B cell (primary cell): ENCODE measurements at regions of chr11 and their contacts with region 1.

Region 1: GRCh38 chr11:74929431-74930363 is 19.2 kb downstream of the XRRA1 start:
- DNase-seq: peak; percentile 87
- ATAC-seq: peak; percentile 78
- H3K4me3 ChIP-seq: no peak overlapping the region
- H3K4me3 Mint-ChIP-seq: no peak overlapping the region
- H3K27ac ChIP-seq: no peak overlapping the region
- H3K27ac Mint-ChIP-seq: no peak overlapping the region
- H3K4me1 ChIP-seq: no peaks in the 10 kb centered on the region
- H3K4me1 Mint-ChIP-seq: no peaks in the 10 kb centered on the region
- H3K27me3 ChIP-seq: no peaks in the 10 kb centered on the region
- H3K27me3 Mint-ChIP-seq: no peaks in the 10 kb centered on the region
- CTCF ChIP-seq: peak; percentile 93

Region 2: GRCh38 chr11:74220376-74220775 is 709.3 kb before region 1 on chr11:
- CTCF ChIA-PET with region 1: no interaction called
- POLR2A ChIA-PET with region 1: no interaction called
- intact Hi-C with region 1: no loop called
- DNase-seq: no peak
- ATAC-seq: no peak
- H3K4me3 ChIP-seq: no peak overlapping the region
- H3K4me3 Mint-ChIP-seq: no peak overlapping the region
- H3K27ac ChIP-seq: no peak overlapping the region
- H3K27ac Mint-ChIP-seq: no peak overlapping the region
- H3K4me1 ChIP-seq: no peaks in the 10 kb centered on the region
- H3K4me1 Mint-ChIP-seq: no peaks in the 10 kb centered on the region
- H3K27me3 ChIP-seq: no peaks in the 10 kb centered on the region
- H3K27me3 Mint-ChIP-seq: no peaks in the 10 kb centered on the region
- CTCF ChIP-seq: no peak

Region 3: GRCh38 chr11:74615311-74615710 is 314.4 kb before region 1 on chr11:
- CTCF ChIA-PET with region 1: no interaction called
- POLR2A ChIA-PET with region 1: no interaction called
- intact Hi-C with region 1: no loop called
- DNase-seq: no peak
- ATAC-seq: no peak
- H3K4me3 ChIP-seq: no peak overlapping the region
- H3K4me3 Mint-ChIP-seq: no peak overlapping the region
- H3K27ac ChIP-seq: no peak overlapping the region
- H3K27ac Mint-ChIP-seq: no peak overlapping the region
- H3K4me1 ChIP-seq: no peaks in the 10 kb centered on the region
- H3K4me1 Mint-ChIP-seq: no peaks in the 10 kb centered on the region
- H3K27me3 ChIP-seq: no peaks in the 10 kb centered on the region
- H3K27me3 Mint-ChIP-seq: no peaks in the 10 kb centered on the region
- CTCF ChIP-seq: no peak

Region 4: GRCh38 chr11:75022759-75023396 is 93.2 kb after region 1 on chr11:
- CTCF ChIA-PET with region 1: interaction called, 235 read pairs
- POLR2A ChIA-PET with region 1: no interaction called
- intact Hi-C with region 1: no loop called
- DNase-seq: peak; percentile 78
- ATAC-seq: peak; percentile 78
- H3K4me3 ChIP-seq: no peak overlapping the region
- H3K4me3 Mint-ChIP-seq: no peak overlapping the region
- H3K27ac ChIP-seq: no peak overlapping the region
- H3K27ac Mint-ChIP-seq: no peak overlapping the region
- H3K4me1 ChIP-seq: no peaks in the 10 kb centered on the region
- H3K4me1 Mint-ChIP-seq: no peaks in the 10 kb centered on the region
- H3K27me3 ChIP-seq: no peaks in the 10 kb centered on the region
- H3K27me3 Mint-ChIP-seq: no peaks in the 10 kb centered on the region
- CTCF ChIP-seq: peak; percentile 99

Region 5: GRCh38 chr11:75142714-75143419 is 213.2 kb after region 1 on chr11:
- CTCF ChIA-PET with region 1: interaction called, 16 read pairs
- POLR2A ChIA-PET with region 1: no interaction called
- intact Hi-C with region 1: loop called (anchors 1 kb)
- DNase-seq: peak; percentile 38
- ATAC-seq: peak; percentile 58
- H3K4me3 ChIP-seq: no peak overlapping the region
- H3K4me3 Mint-ChIP-seq: peak overlapping the region; percentile 8
- H3K27ac ChIP-seq: no peak overlapping the region
- H3K27ac Mint-ChIP-seq: no peak overlapping the region
- H3K4me1 ChIP-seq: peaks cover 8 to 19% of the 10 kb centered on the region in 2 donors
- H3K4me1 Mint-ChIP-seq: peaks cover 20% of the 10 kb centered on the region
- H3K27me3 ChIP-seq: peaks cover 0 to 3% (median 0%) of the 10 kb centered on the region in 4 experiments
- H3K27me3 Mint-ChIP-seq: peaks cover 19% of the 10 kb centered on the region
- CTCF ChIP-seq: no peak

Region 6: GRCh38 chr11:75241036-75241905 is 311.6 kb after region 1 on chr11:
- CTCF ChIA-PET with region 1: interaction called, 28 read pairs
- POLR2A ChIA-PET with region 1: no interaction called
- intact Hi-C with region 1: loop called (anchors 2 kb)
- DNase-seq: peak; percentile 90
- ATAC-seq: peak; percentile 97
- H3K4me3 ChIP-seq: peak overlapping the region in 3 of 5 experiments; percentile 46 to 60 (median 52)
- H3K4me3 Mint-ChIP-seq: peak overlapping the region; percentile 77
- H3K27ac ChIP-seq: no peak overlapping the region
- H3K27ac Mint-ChIP-seq: no peak overlapping the region
- H3K4me1 ChIP-seq: peaks cover 12 to 15% of the 10 kb centered on the region in 2 donors
- H3K4me1 Mint-ChIP-seq: peaks cover 7% of the 10 kb centered on the region
- H3K27me3 ChIP-seq: peaks cover 0 to 54% (median 26%) of the 10 kb centered on the region in 4 experiments
- H3K27me3 Mint-ChIP-seq: peaks cover 66% of the 10 kb centered on the region
- CTCF ChIP-seq: peak; percentile 80

Region 7: DNA sequence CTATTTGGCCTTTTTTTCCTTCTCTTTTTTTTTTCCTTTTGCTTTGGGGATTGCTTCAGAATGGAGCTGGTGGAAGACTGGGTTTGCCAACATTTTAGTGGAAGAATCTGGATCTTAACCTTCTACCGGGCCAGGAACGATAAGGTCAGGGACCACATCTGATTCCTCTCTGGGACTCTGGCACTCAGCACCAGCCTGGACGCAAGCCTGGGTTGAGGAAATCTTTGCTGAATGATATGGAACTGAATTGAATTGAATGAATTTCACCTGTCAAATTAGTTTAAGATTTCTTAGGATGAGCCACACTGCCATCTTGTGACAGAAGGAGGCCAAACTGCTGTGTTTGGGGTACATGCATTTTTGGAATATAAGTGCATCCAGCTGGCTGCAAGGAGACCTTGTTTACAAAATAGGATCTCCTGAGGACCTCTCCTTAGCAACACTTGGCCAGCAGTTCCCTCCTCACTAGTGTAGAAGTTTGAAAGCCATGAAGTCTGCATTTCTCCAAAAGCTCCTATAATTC is 341.3 kb after region 1 on chr11:
- CTCF ChIA-PET with region 1: interaction called, 12 read pairs
- POLR2A ChIA-PET with region 1: no interaction called
- intact Hi-C with region 1: no loop called
- DNase-seq: peak; percentile 54
- ATAC-seq: no peak
- H3K4me3 ChIP-seq: no peak overlapping the region
- H3K4me3 Mint-ChIP-seq: no peak overlapping the region
- H3K27ac ChIP-seq: no peak overlapping the region
- H3K27ac Mint-ChIP-seq: no peak overlapping the region
- H3K4me1 ChIP-seq: peaks cover 9 to 14% of the 10 kb centered on the region in 2 donors
- H3K4me1 Mint-ChIP-seq: peaks cover 14% of the 10 kb centered on the region
- H3K27me3 ChIP-seq: no peaks in the 10 kb centered on the region
- H3K27me3 Mint-ChIP-seq: no peaks in the 10 kb centered on the region
- CTCF ChIP-seq: peak; percentile 64